Cardiac septum (tissue), 1 donor: ENCODE measurements at regions of chr17 and their contacts with region 1.

Region 1: GRCh38 chr17:47229535-47230443 is 20.6 kb downstream of the MYL4 start:
- DNase-seq: peak; percentile 85

Region 2: DNA sequence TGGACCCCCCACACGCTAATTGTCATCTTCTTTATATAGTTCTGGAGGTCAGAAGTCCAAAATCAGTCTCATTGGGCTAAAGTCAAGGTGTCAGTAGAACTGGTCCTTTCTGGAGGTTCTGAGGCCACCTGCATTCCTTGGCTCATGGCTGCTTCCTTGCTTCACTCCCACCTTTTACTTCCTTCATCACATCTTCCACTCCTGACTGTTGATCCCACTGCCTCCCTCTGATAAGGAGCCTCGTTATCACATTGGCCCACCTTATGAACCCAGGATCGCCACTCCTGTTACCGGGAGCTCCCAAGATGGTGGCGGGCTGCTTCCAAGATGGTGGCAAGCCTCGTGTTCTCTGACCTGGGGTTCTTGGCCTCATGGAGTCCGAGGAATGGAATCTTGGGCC is 123.7 kb before region 1 on chr17:
- intact Hi-C with region 1: no loop called
- DNase-seq: no peak

Region 3: GRCh38 chr17:47286198-47286914 is 56.6 kb after region 1 on chr17:
- intact Hi-C with region 1: no loop called
- DNase-seq: no peak

Region 4: GRCh38 chr17:47315451-47316266 is 85.9 kb after region 1 on chr17:
- intact Hi-C with region 1: loop called (anchors 1 kb)
- DNase-seq: no peak

Region 5: DNA sequence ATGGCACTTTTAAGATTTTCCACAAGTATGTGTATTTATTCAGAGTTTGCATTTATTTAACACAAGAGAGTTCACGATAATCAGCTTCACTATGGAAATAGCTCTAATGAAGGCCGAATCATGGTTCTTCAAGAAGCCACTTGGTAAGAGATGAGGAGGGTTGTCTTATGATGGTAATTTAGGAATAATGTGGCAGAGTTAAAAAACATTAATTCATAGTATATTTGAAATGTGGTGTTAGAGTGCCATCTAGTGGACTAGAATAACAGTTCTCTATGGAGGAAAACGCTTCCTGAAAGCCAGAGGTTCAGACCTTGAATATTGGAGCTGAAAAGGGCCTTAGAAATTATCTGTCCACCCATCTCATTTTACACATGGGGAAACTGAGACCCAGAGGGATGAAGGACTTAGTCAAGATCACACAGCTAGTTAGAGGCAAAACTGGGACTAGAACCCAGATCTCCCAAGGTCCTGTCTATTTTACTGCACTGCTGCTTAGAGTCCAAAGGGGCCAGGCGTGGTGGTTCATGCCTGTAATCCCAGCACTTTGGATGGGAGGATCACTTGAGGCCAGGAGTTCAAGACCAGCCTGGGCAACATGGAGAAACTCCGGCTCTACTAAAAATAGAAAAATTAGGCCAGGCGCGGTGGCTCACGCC is 386.1 kb after region 1 on chr17:
- intact Hi-C with region 1: loop called (anchors 10 kb)
- DNase-seq: no peak